AG04449 (cell line): ENCODE measurements at regions of chr14 and their contacts with region 1.

Region 1: DNA sequence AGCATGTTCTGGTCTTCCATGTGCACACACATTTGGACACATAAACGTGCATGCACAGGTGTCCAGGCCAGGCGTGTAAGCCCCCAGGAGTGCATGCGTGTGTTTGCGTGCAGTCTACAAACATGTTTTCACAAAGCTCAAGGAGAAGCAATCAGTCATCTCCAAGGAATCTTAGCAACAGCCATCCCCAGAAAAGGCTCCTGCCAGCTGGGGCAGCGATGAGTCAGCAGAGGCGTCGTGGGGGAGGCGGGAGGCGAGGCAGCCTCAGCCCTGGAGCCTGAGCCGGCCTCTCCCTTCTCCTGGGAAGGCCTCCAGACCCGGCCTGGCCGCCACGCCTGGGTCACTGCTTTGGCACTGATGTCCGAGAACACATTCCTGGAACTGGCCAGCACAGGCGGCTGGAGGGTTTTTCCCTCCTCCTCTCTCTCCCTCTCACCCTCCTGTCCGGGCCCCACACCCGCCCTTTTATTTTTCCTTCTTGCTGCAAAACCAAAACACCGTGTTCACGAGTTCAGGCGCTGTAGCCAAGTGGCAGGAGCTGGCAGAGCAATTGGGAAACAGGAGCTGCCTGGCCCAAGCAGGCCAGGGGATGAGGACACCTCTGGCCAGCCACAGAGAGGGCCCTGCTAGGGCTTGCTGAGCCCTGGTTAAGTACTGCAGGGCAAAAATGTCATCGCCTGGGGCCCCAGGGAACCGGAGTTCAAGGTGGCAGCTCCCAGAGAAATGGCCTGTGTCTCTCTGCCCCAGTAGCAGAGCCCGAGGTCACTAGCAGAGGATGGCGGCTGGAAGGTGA is 92.7 kb downstream of the LRRC74A start:
- DNase-seq: peak; percentile 92
- H3K4me3 ChIP-seq: peak overlapping the region; percentile 39
- CTCF ChIP-seq: peak; percentile 27

Region 2: DNA sequence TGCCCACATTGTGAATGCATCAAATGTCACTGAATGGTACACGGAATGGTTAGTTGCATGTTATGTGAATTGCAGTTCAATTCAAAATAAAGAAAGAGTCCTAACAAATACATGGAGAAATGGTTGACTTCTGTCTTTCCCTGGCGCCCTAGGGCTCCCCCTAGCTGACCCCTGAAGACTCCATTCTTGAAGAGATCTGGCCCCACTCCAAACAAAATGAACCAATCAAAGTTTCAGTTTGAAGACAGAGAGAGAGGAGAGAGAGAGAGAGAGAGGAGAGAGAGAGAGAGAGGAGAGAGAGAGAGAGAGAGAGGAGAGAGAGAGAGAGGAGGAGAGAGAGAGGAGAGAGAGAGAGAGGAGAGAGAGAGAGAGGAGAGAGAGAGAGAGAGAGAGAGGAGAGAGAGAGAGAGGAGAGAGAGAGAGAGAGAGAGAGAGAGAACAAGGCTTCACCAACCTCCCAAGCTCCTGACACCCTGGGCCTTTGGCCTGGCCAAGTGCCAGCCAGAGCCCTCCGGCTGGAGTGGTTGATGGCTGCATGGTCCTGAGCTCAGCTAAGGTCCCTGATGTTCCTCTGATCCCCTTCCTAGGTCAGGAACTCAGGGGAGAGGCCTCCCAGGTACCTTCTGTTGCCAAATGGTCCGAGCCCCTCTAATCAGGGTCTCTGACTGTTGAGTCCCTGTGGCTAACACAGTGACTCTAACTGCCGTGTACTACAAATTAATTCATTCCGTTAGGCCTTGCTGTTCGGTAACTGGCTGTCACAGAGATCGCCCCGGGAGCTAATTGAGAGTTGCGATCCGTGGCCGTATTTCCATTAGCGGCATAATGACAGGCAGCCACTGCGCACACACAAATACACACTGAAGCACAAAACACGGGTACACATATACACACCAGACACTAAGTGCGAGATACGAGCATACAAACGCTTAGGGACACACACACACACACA is 354.2 kb before region 1 on chr14:
- CTCF ChIA-PET with region 1: no interaction called
- POLR2A ChIA-PET with region 1: no interaction called
- DNase-seq: no peak
- H3K4me3 ChIP-seq: no peak overlapping the region
- CTCF ChIP-seq: no peak

Region 3: GRCh38 chr14:76595266-76595665 is 323.7 kb before region 1 on chr14:
- CTCF ChIA-PET with region 1: no interaction called
- POLR2A ChIA-PET with region 1: no interaction called
- DNase-seq: no peak
- H3K4me3 ChIP-seq: no peak overlapping the region
- CTCF ChIP-seq: no peak

Region 4: GRCh38 chr14:76876076-76876475 is 42.9 kb before region 1 on chr14:
- CTCF ChIA-PET with region 1: interaction called, 217 read pairs
- POLR2A ChIA-PET with region 1: interaction called, 3 read pairs
- DNase-seq: peak; percentile 24
- H3K4me3 ChIP-seq: no peak overlapping the region
- CTCF ChIP-seq: peak; percentile 92

Region 5: GRCh38 chr14:76904740-76905438 is 14.1 kb before region 1 on chr14:
- CTCF ChIA-PET with region 1: interaction called, 123 read pairs
- POLR2A ChIA-PET with region 1: interaction called, 21 read pairs
- DNase-seq: peak; percentile 92
- H3K4me3 ChIP-seq: no peak overlapping the region; the same call in none of the 2 replicates
- CTCF ChIP-seq: no peak

Region 6: DNA sequence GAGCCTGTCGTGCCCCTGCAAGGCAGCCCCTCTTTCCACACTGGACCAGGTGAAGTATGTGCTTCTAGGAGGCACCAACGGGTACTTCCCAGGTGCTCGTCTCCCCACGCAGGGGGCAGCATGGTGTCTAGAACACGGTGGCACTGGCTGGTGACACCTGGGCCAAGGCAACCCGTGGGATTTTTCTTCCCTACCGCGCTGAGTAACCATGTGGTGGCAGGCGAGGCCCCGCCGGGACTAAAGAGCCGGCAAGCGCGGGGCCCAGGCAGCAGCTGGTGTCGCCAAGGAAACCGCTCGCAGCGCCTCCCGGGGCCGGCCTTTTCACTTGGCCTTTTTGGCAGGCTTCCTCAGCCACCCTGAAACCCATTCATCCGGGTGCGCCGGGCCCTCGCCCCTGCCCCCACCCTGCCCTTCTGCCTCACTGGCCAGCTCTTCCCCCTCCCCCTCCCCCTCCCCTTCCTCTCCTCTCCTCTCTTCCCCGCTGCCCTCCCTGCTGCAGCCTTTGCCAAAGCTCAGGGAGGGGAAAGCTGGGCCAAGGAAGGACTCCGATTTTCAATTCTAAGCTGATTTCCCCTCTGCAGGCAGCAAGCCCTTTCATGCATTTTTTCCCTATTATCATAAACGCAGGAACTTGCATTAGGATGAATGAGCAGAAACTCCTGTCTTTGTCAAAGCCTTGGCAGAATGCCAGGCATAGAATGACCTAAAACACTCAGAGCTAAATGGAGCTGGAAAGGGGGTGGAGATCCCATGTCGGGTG is 28.3 kb after region 1 on chr14:
- CTCF ChIA-PET with region 1: interaction called, 59 read pairs
- POLR2A ChIA-PET with region 1: interaction called, 6 read pairs
- DNase-seq: peak; percentile 46
- H3K4me3 ChIP-seq: no peak overlapping the region; the same call in 1 of the 2 replicates
- CTCF ChIP-seq: peak; percentile 56

Region 7: GRCh38 chr14:77014004-77014604 is 95.2 kb after region 1 on chr14:
- CTCF ChIA-PET with region 1: interaction called, 24 read pairs
- POLR2A ChIA-PET with region 1: no interaction called
- DNase-seq: no peak
- H3K4me3 ChIP-seq: no peak overlapping the region
- CTCF ChIP-seq: no peak

Region 8: DNA sequence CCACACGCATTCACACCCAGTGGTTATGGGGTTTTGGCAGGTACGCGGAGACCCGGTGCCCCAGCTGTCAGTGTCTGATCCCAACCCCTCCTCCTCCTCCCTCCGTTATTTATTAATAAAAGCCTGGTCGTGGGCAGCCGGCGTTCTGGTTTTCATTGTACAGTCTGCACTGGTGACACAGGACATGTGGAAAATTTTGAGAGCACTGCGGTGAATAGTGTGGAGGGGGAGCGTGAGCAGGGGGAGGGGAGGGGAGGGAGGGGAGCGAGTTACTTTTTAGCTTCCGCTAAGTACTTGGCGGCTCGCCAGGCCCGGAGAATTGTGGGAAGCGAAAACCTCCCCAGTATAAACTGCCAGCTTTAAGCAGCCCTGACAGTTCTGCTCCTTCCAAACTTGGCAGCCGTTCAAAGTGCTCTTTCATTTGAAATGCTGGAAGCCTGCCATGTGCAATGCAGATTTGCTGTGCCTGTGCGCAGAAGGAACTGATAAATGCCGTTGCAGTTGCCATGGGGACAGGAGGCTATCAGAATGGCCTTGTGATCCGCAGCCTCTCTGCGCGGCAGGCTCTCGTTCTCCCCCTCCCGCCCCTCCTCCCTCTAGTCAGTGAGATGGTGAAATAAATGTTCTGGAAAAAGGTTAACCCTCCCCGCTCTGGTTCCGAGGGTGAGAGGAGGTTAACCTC is 121.3 kb after region 1 on chr14:
- CTCF ChIA-PET with region 1: interaction called, 661 read pairs
- POLR2A ChIA-PET with region 1: interaction called, 55 read pairs
- DNase-seq: peak; percentile 90
- H3K4me3 ChIP-seq: peak overlapping the region; percentile 42
- CTCF ChIP-seq: no peak